Ascending aorta (tissue), 2 donors: ENCODE measurements at regions of chr3 and their contacts with region 1.

Region 1: DNA sequence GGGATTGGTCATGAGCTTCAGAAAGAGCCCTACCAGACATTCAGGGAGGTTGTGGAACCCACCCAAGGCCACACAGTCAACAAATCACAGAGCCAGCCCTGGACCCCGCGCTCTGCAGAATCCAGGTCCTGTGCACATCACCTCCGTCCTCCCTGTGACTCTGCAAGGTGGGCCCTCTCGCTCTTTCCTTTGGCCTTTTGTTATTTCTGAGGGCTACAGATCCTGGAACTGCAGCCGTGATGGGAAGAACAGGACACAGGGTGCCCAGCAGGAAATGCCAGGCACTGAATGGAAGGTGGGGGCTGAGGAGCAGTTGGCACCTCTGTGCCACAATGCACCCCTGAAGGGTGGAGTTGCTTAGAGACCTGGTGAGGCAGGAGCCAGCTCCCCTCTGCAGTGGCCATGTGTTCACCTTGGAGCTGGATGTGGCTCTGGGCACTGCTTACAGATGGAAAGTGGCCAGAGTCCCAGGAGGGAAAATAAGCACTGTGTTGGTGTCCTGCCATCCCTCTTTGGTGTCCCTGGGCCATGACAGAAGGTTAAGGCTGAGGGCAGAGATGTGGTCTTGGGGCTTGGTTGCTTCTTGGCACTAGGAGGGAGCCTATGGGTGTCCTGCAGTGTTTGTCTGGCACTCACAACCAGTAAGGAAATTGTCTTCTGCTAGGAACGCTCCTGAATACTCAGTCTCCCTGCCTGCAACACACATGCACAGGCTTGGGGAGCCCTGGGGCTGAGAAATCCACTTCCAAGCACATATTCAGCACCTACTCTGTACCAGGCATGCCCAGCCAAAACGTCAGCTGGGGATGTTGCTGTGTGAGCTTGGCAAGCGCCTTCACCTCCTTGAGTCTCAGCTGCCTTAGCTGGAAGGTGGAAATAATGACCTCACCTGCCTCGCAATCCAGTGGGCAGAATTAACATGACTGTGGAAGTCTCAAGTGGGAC is 98.0 kb upstream of the SLC6A6 start:
- DNase-seq: no peak
- H3K4me3 ChIP-seq: no peak overlapping the region
- H3K27ac ChIP-seq: no peak overlapping the region
- H3K4me1 ChIP-seq: no peaks in the 10 kb centered on the region
- H3K27me3 ChIP-seq: no peaks in the 10 kb centered on the region
- CTCF ChIP-seq: no peak

Region 2: DNA sequence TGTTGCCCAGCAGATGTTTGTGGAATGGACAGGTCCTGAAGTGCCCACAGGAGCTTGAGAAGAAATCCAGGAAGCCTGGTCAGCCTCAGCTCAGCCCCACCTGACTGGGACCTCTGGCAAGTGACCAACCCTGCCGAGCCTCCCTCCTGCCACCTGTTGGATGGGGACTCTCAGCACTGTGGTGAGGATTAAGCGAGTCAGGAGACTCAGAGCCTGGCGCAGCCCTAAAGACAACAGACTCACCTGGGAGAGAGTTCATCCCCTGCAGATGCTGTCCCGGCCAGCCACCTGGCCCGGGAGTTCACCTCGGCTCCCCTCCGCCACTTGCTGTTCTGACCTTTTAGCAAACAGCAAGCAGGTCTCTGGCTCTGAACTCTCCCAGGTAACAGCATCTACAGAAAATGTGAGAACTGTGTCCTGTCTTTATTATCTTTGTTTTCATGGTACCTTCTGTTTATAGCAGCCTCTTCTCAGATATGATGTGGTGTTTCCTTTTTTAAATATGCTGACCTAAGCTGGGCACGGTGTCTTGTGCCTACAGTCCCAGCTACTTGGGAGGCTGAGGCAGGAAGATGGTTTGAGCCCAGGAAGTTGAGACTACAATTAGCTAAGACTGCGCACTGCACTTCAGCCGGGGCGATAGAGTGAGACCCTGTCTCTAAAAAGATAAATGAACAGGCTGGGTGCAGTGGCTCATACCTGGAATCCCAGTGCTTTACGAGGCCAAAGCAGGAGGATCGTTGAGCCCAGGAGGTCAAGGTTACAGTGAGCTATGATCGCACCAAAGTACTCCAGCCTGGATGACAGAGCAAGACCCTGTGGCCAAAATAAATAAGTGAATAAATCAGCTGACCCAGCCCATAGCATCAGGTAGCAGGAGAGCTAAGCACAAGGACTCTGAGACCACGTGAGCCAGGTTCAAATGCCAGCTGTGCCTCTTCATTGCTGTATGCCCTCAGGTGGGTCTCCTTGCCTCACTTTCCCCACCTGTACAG is 65.6 kb after region 1 on chr3:
- intact Hi-C with region 1: loop called (anchors 5 kb)
- DNase-seq: no peak
- H3K4me3 ChIP-seq: no peak overlapping the region
- H3K27ac ChIP-seq: no peak overlapping the region
- H3K4me1 ChIP-seq: peaks cover 0 to 5% of the 10 kb centered on the region in 2 donors
- H3K27me3 ChIP-seq: no peaks in the 10 kb centered on the region
- CTCF ChIP-seq: no peak